CD4-positive, alpha-beta memory T cell (primary cell): ENCODE measurements at regions of chr10 and their contacts with region 1.

Region 1: DNA sequence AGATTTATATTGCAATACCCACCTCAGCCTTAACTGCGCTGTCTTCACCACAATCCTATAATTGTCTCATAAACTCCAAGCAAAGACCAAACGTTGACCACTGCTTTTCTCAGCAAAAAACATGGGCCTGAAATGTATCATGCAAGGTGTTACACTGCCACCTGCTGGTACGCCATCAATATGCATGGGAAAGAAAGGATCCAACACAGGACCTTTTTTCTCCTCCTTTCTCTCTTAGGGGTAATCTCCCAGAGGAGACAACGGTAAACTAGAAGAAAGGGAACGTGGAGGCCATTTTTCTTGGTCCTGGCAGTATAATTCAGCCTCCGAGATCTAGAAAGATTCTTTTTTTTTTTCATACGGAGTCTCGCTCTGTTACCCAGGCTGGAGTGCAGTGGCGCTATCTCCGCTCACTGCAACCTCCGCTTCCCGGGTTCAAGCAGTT is 79.1 kb upstream of the MPP7 start:
- DNase-seq: peak; percentile 78 to 85 (median 82)
- H3K4me3 ChIP-seq: no peak overlapping the region
- H3K4me3 Mint-ChIP-seq: peak overlapping the region in 3 of 8 donors; percentile 42 to 63 (median 45)
- H3K27ac ChIP-seq: no peak overlapping the region
- H3K27ac Mint-ChIP-seq: peak overlapping the region in 5 of 7 donors; percentile 0 to 94 (median 68)
- H3K4me1 ChIP-seq: peaks cover 17% of the 10 kb centered on the region
- H3K4me1 Mint-ChIP-seq: peaks cover 18 to 25% (median 21%) of the 10 kb centered on the region in 4 donors
- H3K27me3 ChIP-seq: no peaks in the 10 kb centered on the region
- H3K27me3 Mint-ChIP-seq: peaks cover 4 to 5% of the 10 kb centered on the region in 2 donors

Region 2: DNA sequence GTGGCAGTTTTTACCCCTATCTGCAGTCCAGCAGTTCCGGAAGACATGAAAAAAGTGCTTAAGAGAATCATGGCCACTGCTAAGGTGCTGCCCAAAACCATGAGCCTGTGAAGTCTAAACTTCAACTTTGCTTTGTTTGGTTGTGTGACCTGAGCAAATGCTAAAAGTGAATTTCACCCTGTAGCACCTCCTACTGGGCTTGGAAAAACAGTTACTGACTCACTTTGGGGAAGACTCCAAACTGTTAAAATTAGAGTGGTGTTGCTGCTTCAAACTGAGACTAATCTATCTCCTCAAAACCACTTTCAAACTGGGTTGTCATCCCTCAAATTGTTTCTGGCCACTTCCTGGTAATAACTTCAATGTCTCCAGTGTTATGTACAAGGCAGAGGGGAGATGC is 657.6 kb before region 1 on chr10:
- CTCF ChIA-PET with region 1: no interaction called
- POLR2A ChIA-PET with region 1: no interaction called
- intact Hi-C with region 1: no loop called
- DNase-seq: no peak
- H3K4me3 ChIP-seq: no peak overlapping the region
- H3K4me3 Mint-ChIP-seq: no peak overlapping the region
- H3K27ac ChIP-seq: no peak overlapping the region
- H3K27ac Mint-ChIP-seq: no peak overlapping the region
- H3K4me1 ChIP-seq: no peaks in the 10 kb centered on the region
- H3K4me1 Mint-ChIP-seq: peaks cover 0 to 2% (median 0%) of the 10 kb centered on the region in 4 donors
- H3K27me3 ChIP-seq: no peaks in the 10 kb centered on the region
- H3K27me3 Mint-ChIP-seq: peaks cover 4 to 13% of the 10 kb centered on the region in 2 donors

Region 3: DNA sequence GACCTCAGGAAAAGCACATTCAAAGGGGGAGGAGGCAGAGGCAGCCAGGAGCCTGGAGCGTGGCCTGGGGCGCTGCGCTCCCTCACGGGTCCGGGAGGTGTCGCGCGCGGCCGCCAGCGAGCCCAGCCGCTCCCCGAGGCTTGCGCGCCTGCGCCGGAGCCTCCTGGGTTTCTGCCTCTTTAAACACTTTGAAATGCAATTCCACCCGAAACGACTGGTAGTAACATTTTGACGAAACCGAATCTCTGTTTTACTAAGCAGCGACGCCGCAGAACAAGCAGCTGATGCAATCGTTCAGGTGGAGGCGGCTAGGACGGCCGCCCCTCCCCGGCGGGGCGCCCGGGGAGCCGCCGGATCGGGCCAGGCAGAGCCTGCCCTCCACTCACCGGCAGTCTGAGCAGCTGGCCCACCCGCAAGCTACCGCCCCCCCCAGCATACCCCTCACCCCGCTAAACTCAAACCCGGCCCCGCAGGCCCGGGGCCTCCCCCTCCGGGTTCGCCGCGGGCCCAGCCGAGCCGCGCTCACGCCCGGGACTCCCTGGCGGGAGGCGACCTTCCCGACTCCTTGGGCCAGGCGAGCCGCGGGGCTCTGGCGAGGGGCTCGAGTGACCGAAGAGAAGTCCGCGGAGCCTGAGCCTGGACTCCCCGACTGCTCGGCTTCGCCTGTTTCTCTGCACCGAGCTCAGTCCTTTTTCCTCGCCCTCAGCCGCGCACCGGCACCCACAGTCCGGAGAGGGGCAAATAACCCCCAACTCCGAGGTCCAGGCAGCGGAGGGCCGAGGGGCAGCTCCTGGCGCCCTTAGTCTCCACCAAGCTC is 639.5 kb before region 1 on chr10:
- CTCF ChIA-PET with region 1: interaction called, 3 read pairs
- POLR2A ChIA-PET with region 1: no interaction called
- intact Hi-C with region 1: loop called (anchors 2 kb)
- DNase-seq: peak; percentile 77 to 82 (median 80)
- H3K4me3 ChIP-seq: peak overlapping the region; percentile 22 to 68
- H3K4me3 Mint-ChIP-seq: peak overlapping the region; percentile 82 to 96 (median 89)
- H3K27ac ChIP-seq: no peak overlapping the region
- H3K27ac Mint-ChIP-seq: peak overlapping the region in 1 of 7 donors; percentile 57
- H3K4me1 ChIP-seq: peaks cover 56% of the 10 kb centered on the region
- H3K4me1 Mint-ChIP-seq: peaks cover 23 to 47% (median 35%) of the 10 kb centered on the region in 4 donors
- H3K27me3 ChIP-seq: peaks cover 52% of the 10 kb centered on the region
- H3K27me3 Mint-ChIP-seq: peaks cover 45 to 48% of the 10 kb centered on the region in 2 donors

Region 4: DNA sequence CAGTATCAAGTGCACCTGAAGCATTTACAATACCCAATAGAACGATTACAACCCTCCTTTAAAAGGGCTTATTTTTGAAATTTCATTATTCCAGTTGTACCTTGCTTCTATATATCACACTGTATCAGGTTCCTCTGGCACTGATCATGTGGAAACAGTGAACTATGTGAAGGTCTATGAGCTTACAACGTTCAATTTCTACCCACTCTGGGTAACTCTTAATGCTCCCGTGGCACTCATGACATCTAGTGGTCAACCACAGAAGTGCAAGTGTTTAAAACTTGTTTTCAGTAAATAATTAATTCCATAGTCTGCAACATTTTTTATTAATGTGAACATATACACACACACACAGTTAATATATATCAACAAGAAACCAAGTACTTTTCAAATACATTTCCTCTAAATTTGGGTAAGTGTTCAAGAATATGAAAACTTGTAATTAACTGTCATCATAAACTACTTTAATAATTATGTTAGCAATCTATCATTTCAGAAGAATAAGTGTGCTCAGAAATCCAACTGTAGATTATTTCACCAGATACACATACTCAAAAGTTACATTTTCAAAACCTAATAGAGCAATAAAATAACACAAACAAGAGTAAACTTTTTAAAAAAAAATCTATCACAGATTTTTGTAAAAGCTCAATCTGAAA is 140.1 kb before region 1 on chr10:
- CTCF ChIA-PET with region 1: interaction called, 37 read pairs
- POLR2A ChIA-PET with region 1: interaction called, 4 read pairs
- intact Hi-C with region 1: no loop called
- DNase-seq: peak in 4 of 5 donors; percentile 36 to 49 (median 42)
- H3K4me3 ChIP-seq: no peak overlapping the region
- H3K4me3 Mint-ChIP-seq: no peak overlapping the region
- H3K27ac ChIP-seq: no peak overlapping the region
- H3K27ac Mint-ChIP-seq: no peak overlapping the region
- H3K4me1 ChIP-seq: peaks cover 14% of the 10 kb centered on the region
- H3K4me1 Mint-ChIP-seq: peaks cover 13 to 20% (median 17%) of the 10 kb centered on the region in 4 donors
- H3K27me3 ChIP-seq: no peaks in the 10 kb centered on the region
- H3K27me3 Mint-ChIP-seq: no peaks in the 10 kb centered on the region

Region 5: GRCh38 chr10:28302638-28303488 is 79.1 kb before region 1 on chr10 and contains the start of gene MPP7:
- CTCF ChIA-PET with region 1: interaction called, 312 read pairs
- POLR2A ChIA-PET with region 1: interaction called, 100 read pairs
- intact Hi-C with region 1: loop called (anchors 1 kb)
- DNase-seq: peak; percentile 96 to 98 (median 97)
- H3K4me3 ChIP-seq: peak within 1 kb of the TSS; percentile 82 to 93
- H3K4me3 Mint-ChIP-seq: peak within 1 kb of the TSS; percentile 88 to 97 (median 94)
- H3K27ac ChIP-seq: peak within 1 kb of the TSS; percentile 51
- H3K27ac Mint-ChIP-seq: peak within 1 kb of the TSS; percentile 87 to 95 (median 93)
- H3K4me1 ChIP-seq: peaks cover 48% of the 10 kb centered on the region
- H3K4me1 Mint-ChIP-seq: peaks cover 44 to 76% (median 57%) of the 10 kb centered on the region in 4 donors
- H3K27me3 ChIP-seq: no peaks in the 10 kb centered on the region
- H3K27me3 Mint-ChIP-seq: no peaks in the 10 kb centered on the region
- total RNA-seq, gene MPP7: 24.9 to 28.1 TPM

Region 6: GRCh38 chr10:28367929-28368484 is 13.9 kb before region 1 on chr10:
- CTCF ChIA-PET with region 1: interaction called, 72 read pairs
- POLR2A ChIA-PET with region 1: interaction called, 39 read pairs
- intact Hi-C with region 1: loop called (anchors 1 kb)
- DNase-seq: peak; percentile 74 to 86 (median 80)
- H3K4me3 ChIP-seq: no peak overlapping the region
- H3K4me3 Mint-ChIP-seq: peak overlapping the region; percentile 41 to 87 (median 80)
- H3K27ac ChIP-seq: peak overlapping the region; percentile 65
- H3K27ac Mint-ChIP-seq: peak overlapping the region; percentile 85 to 98 (median 97)
- H3K4me1 ChIP-seq: peaks cover 58% of the 10 kb centered on the region
- H3K4me1 Mint-ChIP-seq: peaks cover 33 to 61% (median 49%) of the 10 kb centered on the region in 4 donors
- H3K27me3 ChIP-seq: no peaks in the 10 kb centered on the region
- H3K27me3 Mint-ChIP-seq: no peaks in the 10 kb centered on the region